ENCODE measurements at regions of chr12 and their contacts with region 1.

Region 1: DNA sequence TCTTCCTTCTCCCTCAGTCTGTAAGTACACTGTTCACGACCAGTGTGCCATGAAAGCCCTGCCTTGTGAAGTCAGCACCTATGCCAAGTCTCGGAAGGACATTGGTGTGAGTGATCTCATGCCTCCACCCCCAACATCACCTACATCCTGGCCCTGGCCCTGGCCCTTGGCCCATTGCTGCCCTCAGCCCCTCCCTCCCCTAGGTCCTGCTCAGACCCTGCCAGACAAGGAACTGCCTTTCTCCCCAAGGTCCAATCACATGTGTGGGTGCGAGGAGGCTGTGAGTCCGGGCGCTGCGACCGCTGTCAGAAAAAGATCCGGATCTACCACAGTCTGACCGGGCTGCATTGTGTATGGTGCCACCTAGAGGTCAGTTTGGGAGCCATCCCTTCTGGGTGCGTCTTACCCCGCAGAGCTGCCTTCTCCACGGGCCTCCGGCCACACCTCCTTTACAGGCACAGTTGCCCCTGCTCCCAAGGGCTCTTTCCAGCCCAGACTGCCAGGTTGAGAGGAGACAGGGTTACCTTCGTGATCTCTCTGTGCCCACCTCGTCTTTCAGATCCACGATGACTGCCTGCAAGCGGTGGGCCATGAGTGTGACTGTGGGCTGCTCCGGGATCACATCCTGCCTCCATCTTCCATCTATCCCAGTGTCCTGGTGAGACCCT is 9.2 kb downstream of the DGKA start:
- DNase-seq: peak; percentile 60
- ATAC-seq: peak; percentile 100
- H3K4me3 ChIP-seq: no peak overlapping the region
- H3K27ac ChIP-seq: no peak overlapping the region
- H3K4me1 ChIP-seq: peaks cover 10% of the 10 kb centered on the region
- H3K27me3 ChIP-seq: no peaks in the 10 kb centered on the region
- CTCF ChIP-seq: peak; percentile 91 to 95 (median 94); a peak in 5 of 6 replicates
- EP300 ChIP-seq: no peak
- POLR2A ChIP-seq: no peak
- RAD21 ChIP-seq: peak; percentile 82

Region 2: GRCh38 chr12:55745361-55746146 is 194.6 kb before region 1 on chr12:
- CTCF ChIA-PET with region 1: interaction called, 80 read pairs
- POLR2A ChIA-PET with region 1: interaction called, 4 read pairs
- RAD21 ChIA-PET with region 1: interaction called, 43 read pairs
- SMC1A ChIA-PET with region 1: interaction called, 51 read pairs
- in situ Hi-C with region 1: no loop called
- intact Hi-C with region 1: no loop called
- DNase-seq: no peak
- ATAC-seq: peak; percentile 11
- H3K4me3 ChIP-seq: peak overlapping the region; percentile 79
- H3K27ac ChIP-seq: no peak overlapping the region
- H3K4me1 ChIP-seq: peaks cover 5% of the 10 kb centered on the region
- H3K27me3 ChIP-seq: no peaks in the 10 kb centered on the region
- CTCF ChIP-seq: no peak
- EP300 ChIP-seq: no peak
- POLR2A ChIP-seq: no peak
- RAD21 ChIP-seq: no peak

Region 3: DNA sequence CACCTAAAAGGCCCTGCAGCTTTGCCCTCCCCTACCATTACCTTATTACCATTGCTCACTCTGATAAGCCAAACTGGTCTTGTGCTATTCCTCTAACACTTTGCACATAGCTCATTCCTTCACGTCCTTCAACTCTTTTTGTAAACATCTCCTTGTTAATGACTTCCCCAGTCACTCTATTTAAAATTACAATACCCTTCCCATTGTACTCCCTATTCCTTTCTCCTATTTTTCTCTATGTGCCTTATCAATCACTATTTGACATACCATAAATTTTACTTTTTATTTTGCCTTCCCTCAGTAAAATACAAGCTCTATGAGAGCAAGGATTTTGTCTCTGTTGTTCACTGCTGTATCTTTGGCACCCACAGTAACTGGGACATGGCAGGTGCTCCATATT is 128.1 kb before region 1 on chr12:
- CTCF ChIA-PET with region 1: interaction called, 49 read pairs
- POLR2A ChIA-PET with region 1: no interaction called
- RAD21 ChIA-PET with region 1: interaction called, 10 read pairs
- SMC1A ChIA-PET with region 1: interaction called, 4 read pairs
- in situ Hi-C with region 1: no loop called
- intact Hi-C with region 1: no loop called
- DNase-seq: no peak
- ATAC-seq: 0 out of 3 replicates have a peak, but pooled peaks have one; percentile 12
- H3K4me3 ChIP-seq: no peak overlapping the region
- H3K27ac ChIP-seq: no peak overlapping the region
- H3K4me1 ChIP-seq: 0 out of 2 replicates have a peak, but pooled peaks cover 5% of the 10 kb centered on the region
- H3K27me3 ChIP-seq: no peaks in the 10 kb centered on the region
- CTCF ChIP-seq: no peak
- EP300 ChIP-seq: no peak
- POLR2A ChIP-seq: no peak
- RAD21 ChIP-seq: no peak

Region 4: DNA sequence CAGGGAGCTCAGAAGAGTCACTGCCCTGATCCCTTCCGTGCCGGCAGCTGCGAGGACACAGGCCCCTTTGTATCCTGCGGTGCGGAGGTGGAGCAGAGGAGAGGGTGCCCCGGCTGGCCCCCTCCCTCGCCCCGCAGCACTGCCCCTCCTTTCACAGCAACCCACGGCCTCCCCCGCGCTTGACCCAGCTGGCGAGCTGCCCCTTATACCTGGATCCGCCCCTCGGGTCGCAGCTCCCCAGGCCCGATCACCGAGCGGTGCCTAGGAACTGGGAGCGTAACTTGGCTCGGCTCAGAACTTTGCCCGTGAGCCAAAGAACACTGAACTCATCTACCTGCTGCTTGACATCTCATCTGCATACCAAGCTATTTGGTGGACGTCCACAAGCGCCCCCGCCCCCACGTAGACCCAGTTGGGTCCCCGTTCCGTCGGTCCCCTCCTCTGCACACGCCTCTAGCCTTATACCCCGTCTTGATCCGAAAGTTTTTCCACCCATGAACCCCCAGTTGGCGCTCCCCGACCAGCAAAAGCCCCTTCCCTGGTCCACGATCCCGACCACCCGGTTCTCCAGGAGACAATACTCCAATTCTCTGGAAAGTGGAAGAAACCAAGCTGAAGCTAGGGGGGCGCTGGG is 110.1 kb before region 1 on chr12:
- CTCF ChIA-PET with region 1: interaction called, 18 read pairs
- POLR2A ChIA-PET with region 1: interaction called, 10 read pairs
- RAD21 ChIA-PET with region 1: interaction called, 7 read pairs
- SMC1A ChIA-PET with region 1: interaction called, 4 read pairs
- in situ Hi-C with region 1: no loop called
- intact Hi-C with region 1: no loop called
- DNase-seq: no peak
- ATAC-seq: peak; percentile 25
- H3K4me3 ChIP-seq: peak overlapping the region; percentile 96
- H3K27ac ChIP-seq: peak overlapping the region; percentile 76
- H3K4me1 ChIP-seq: peaks cover 21% of the 10 kb centered on the region; the same call in 1 of the 2 replicates
- H3K27me3 ChIP-seq: no peaks in the 10 kb centered on the region
- CTCF ChIP-seq: no peak
- EP300 ChIP-seq: no peak
- POLR2A ChIP-seq: 0 out of 2 replicates have a peak, but pooled peaks have one; percentile 20
- RAD21 ChIP-seq: 0 out of 2 replicates have a peak, but pooled peaks have one; percentile 13

Region 5: GRCh38 chr12:55966408-55967281 is 26.4 kb after region 1 on chr12 and contains the start of gene CDK2:
- CTCF ChIA-PET with region 1: interaction called, 13 read pairs
- POLR2A ChIA-PET with region 1: interaction called, 4 read pairs
- RAD21 ChIA-PET with region 1: interaction called, 4 read pairs
- SMC1A ChIA-PET with region 1: interaction called, 3 read pairs
- in situ Hi-C with region 1: no loop called
- intact Hi-C with region 1: no loop called
- DNase-seq: peak; percentile 40
- ATAC-seq: peak; percentile 91
- H3K4me3 ChIP-seq: peak within 1 kb of the TSS; percentile 96
- H3K27ac ChIP-seq: peak within 1 kb of the TSS; percentile 79
- H3K4me1 ChIP-seq: peaks cover 15% of the 10 kb centered on the region
- H3K27me3 ChIP-seq: no peaks in the 10 kb centered on the region
- CTCF ChIP-seq: no peak
- EP300 ChIP-seq: no peak
- POLR2A ChIP-seq: peak; percentile 81
- RAD21 ChIP-seq: no peak
- polyA plus RNA-seq, gene CDK2: 13.1 to 16.1 TPM

Measured in GM12878 (cell line).